IMR-90 (cell line): ENCODE measurements at regions of chr7 and their contacts with region 1.

Region 1: DNA sequence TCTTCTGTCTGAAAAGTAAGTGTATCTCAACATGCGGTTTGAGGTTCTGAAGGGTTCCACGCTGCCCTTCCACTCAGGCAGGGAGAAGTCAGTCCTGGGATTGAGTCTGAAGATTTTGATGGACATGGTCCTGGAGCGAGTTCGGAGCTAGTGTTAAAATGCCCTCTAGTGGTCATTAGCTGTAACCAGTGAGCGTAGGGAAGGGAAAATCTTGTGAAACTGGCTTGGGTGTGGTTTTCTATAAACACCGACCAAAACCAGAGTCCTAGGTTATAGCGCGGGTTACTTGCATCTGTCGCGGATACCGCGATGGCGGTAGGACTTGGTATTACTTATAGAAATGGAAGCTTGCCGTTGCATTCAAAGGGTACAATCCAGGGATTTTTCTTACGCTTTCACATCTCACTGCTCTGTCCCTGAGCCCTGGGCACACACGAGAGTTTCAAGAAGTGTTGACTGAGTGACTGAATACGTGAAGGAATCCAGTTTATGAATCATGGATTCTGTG is 348.2 kb upstream of the C7orf33 start:
- DNase-seq: peak; percentile 16
- ATAC-seq: peak; percentile 53
- H3K4me3 ChIP-seq: no peak overlapping the region
- H3K27ac ChIP-seq: no peak overlapping the region
- H3K4me1 ChIP-seq: no peaks in the 10 kb centered on the region
- H3K27me3 ChIP-seq: no peaks in the 10 kb centered on the region
- CTCF ChIP-seq: peak; percentile 51
- POLR2A ChIP-seq: no peak
- RAD21 ChIP-seq: peak; percentile 51

Region 2: GRCh38 chr7:146741911-146742310 is 1500.4 kb before region 1 on chr7:
- CTCF ChIA-PET with region 1: no interaction called
- POLR2A ChIA-PET with region 1: no interaction called
- dilution Hi-C with region 1: no loop called
- in situ Hi-C with region 1: no loop called
- intact Hi-C with region 1: loop called (anchors 5 kb)
- DNase-seq: no peak
- ATAC-seq: no peak
- H3K4me3 ChIP-seq: no peak overlapping the region
- H3K27ac ChIP-seq: no peak overlapping the region
- H3K4me1 ChIP-seq: no peaks in the 10 kb centered on the region
- H3K27me3 ChIP-seq: no peaks in the 10 kb centered on the region
- CTCF ChIP-seq: no peak
- POLR2A ChIP-seq: no peak
- RAD21 ChIP-seq: no peak

Region 3: GRCh38 chr7:147096629-147097028 is 1145.7 kb before region 1 on chr7:
- CTCF ChIA-PET with region 1: no interaction called
- POLR2A ChIA-PET with region 1: no interaction called
- dilution Hi-C with region 1: no loop called
- in situ Hi-C with region 1: no loop called
- intact Hi-C with region 1: no loop called
- DNase-seq: no peak
- ATAC-seq: no peak
- H3K4me3 ChIP-seq: no peak overlapping the region
- H3K27ac ChIP-seq: no peak overlapping the region
- H3K4me1 ChIP-seq: no peaks in the 10 kb centered on the region
- H3K27me3 ChIP-seq: no peaks in the 10 kb centered on the region
- CTCF ChIP-seq: no peak
- POLR2A ChIP-seq: no peak
- RAD21 ChIP-seq: no peak